ENCODE measurements at regions of chr15 and their contacts with region 1.

Region 1: GRCh38 chr15:81274931-81275707 is 48.8 kb downstream of the STARD5 start:
- DNase-seq: peak; percentile 72
- H3K4me3 ChIP-seq: no peak overlapping the region
- H3K27ac ChIP-seq: peak overlapping the region; percentile 28 to 34
- H3K4me1 ChIP-seq: peaks cover 8% of the 10 kb centered on the region
- H3K27me3 ChIP-seq: no peaks in the 10 kb centered on the region
- CTCF ChIP-seq: peak; percentile 79 to 95 (median 92)
- POLR2A ChIP-seq: no peak

Region 2: GRCh38 chr15:80932989-80933388 is 342.1 kb before region 1 on chr15:
- intact Hi-C with region 1: no loop called
- DNase-seq: no peak
- H3K4me3 ChIP-seq: no peak overlapping the region
- H3K27ac ChIP-seq: no peak overlapping the region
- H3K4me1 ChIP-seq: no peaks in the 10 kb centered on the region
- H3K27me3 ChIP-seq: no peaks in the 10 kb centered on the region
- CTCF ChIP-seq: no peak
- POLR2A ChIP-seq: no peak

Region 3: DNA sequence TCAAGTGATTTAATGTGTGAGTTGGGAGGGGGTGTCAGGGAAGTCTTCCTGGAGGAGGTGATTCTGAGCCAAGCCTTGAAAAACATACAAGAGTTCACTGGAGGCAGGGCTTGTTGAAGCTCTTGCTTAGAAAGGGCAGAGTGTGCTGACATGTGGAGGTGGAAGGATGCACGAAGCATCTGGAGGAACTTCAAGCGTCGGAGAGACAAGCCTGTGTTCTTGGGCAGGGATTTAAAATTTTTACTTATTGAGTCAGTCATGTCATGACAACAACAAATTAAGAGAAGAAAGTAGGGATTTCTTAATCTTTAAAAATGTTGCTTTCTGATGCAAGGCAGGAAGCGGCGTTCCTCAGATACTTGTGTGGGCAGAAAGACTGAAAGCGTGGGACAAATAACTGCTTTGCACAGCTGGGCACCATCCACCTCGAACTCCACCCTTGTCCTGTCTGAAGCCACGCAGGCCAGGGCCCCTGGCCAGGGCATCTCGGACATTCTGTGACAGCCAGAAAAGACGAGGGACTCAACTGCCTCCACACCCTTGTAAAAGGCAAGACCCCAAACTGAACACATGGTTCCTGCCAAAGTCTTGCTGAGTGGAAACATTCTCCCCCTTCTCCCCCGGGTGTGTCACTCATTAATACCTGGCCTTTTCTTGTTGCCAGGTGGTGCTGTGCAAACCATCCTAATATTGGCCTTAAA is 85.4 kb before region 1 on chr15:
- intact Hi-C with region 1: no loop called
- DNase-seq: no peak
- H3K4me3 ChIP-seq: no peak overlapping the region
- H3K27ac ChIP-seq: peak overlapping the region in 1 of 2 donors; percentile 12
- H3K4me1 ChIP-seq: no peaks in the 10 kb centered on the region
- H3K27me3 ChIP-seq: no peaks in the 10 kb centered on the region
- CTCF ChIP-seq: no peak
- POLR2A ChIP-seq: no peak

Region 4: GRCh38 chr15:81312790-81313543 is 37.8 kb after region 1 on chr15:
- intact Hi-C with region 1: loop called (anchors 5 kb)
- DNase-seq: peak; percentile 78
- H3K4me3 ChIP-seq: no peak overlapping the region
- H3K27ac ChIP-seq: peak overlapping the region; percentile 29 to 38
- H3K4me1 ChIP-seq: no peaks in the 10 kb centered on the region
- H3K27me3 ChIP-seq: no peaks in the 10 kb centered on the region
- CTCF ChIP-seq: no peak
- POLR2A ChIP-seq: no peak

Region 5: GRCh38 chr15:81336568-81336967 is 61.4 kb after region 1 on chr15:
- intact Hi-C with region 1: loop called (anchors 10 kb)
- DNase-seq: no peak
- H3K4me3 ChIP-seq: no peak overlapping the region
- H3K27ac ChIP-seq: no peak overlapping the region
- H3K4me1 ChIP-seq: peaks cover 4% of the 10 kb centered on the region
- H3K27me3 ChIP-seq: no peaks in the 10 kb centered on the region
- CTCF ChIP-seq: no peak
- POLR2A ChIP-seq: no peak

Region 6: GRCh38 chr15:81384891-81385720 is 110.0 kb after region 1 on chr15:
- intact Hi-C with region 1: loop called (anchors 5 kb)
- DNase-seq: no peak
- H3K4me3 ChIP-seq: no peak overlapping the region
- H3K27ac ChIP-seq: no peak overlapping the region
- H3K4me1 ChIP-seq: peaks cover 6% of the 10 kb centered on the region
- H3K27me3 ChIP-seq: no peaks in the 10 kb centered on the region
- CTCF ChIP-seq: no peak
- POLR2A ChIP-seq: no peak

Region 7: DNA sequence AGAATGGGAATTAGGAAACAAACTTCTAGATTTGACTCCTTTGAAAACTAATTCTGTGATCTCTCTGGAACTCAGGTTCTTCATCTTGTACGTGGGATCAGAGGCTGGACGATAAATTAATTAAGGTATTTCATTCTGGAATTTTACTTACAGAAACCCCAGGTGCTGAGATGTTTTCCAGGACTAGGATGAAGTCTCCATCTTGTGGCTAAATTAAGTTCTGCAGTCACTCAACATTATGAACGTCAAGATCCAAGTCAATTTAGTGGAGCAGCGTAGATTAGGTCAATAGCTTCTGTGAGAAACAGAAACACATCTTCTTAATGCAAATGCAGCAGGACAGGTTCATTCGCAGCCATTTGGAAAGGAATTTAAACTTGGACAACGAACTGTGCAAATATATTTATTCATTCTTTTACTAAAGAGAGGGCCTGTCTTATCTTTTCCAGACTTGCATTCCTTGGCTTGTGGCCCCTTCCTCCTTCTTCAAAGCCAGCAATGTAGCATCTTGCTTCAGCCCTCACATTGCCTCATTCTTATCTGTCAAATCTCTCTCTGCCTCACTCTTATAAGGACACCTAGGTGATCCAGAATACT is 125.6 kb after region 1 on chr15:
- intact Hi-C with region 1: loop called (anchors 2 kb)
- DNase-seq: peak; percentile 42
- H3K4me3 ChIP-seq: no peak overlapping the region
- H3K27ac ChIP-seq: no peak overlapping the region
- H3K4me1 ChIP-seq: peaks cover 5% of the 10 kb centered on the region
- H3K27me3 ChIP-seq: no peaks in the 10 kb centered on the region
- CTCF ChIP-seq: peak; percentile 65 to 90 (median 87)
- POLR2A ChIP-seq: no peak

Measured in prostate gland (tissue), 2 donors.